Breast epithelium (tissue), 4 donors: ENCODE measurements at regions of chr9 and their contacts with region 1.

Region 1: GRCh38 chr9:131630205-131630831 is 85.0 kb downstream of the PRRT1B start:
- DNase-seq: no peak
- H3K4me3 ChIP-seq: no peak overlapping the region
- H3K27ac ChIP-seq: no peak overlapping the region
- H3K4me1 ChIP-seq: peaks cover 0 to 10% of the 10 kb centered on the region in 2 donors
- H3K27me3 ChIP-seq: no peaks in the 10 kb centered on the region
- CTCF ChIP-seq: no peak
- POLR2A ChIP-seq: no peak

Region 2: GRCh38 chr9:131203431-131204218 is 426.7 kb before region 1 on chr9:
- intact Hi-C with region 1: loop called (anchors 5 kb)
- DNase-seq: no peak
- H3K4me3 ChIP-seq: no peak overlapping the region
- H3K27ac ChIP-seq: no peak overlapping the region
- H3K4me1 ChIP-seq: no peaks in the 10 kb centered on the region
- H3K27me3 ChIP-seq: no peaks in the 10 kb centered on the region
- CTCF ChIP-seq: no peak
- POLR2A ChIP-seq: no peak

Region 3: DNA sequence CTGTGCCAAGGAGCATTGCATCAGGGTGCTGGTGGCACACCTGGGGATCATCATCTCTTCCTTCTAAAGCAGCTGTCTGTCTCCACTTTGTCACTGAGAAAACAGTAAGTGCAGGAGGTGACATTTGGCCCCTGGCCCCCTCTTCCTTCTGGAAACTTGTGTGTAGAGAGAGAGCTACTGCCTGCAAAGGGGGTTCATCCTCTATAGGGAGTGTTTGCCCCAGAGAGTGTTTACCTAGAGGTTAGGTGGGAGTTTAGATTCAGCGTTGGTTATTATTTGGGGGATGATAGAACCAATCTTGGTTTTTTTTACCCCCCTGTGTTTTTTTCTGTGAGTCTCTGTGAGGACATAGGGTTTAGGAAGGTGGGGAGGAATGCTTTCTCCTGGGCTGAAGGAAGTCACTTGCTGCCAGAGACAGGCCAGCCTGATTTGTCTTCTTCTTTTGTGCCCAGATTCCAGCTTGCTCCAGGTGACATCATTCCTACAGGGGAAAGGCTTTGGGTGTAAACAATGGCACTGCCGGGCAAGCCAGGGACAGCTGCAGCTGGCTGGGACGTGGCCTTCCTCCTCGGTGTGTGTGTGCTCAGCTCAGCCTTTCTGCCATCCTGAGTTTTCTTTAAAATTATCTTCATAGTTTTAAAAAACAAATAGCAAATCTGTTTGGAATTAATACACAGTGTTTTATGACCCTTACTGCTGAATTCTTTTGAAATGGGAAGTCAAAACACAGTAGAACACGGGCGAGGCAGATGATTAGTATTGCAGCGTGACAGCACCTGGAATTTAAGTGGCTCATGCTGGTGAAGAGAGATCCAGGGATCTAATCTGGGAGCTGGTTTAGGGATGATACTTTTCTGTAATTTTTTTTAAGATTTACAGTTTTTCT is 211.9 kb before region 1 on chr9:
- intact Hi-C with region 1: no loop called
- DNase-seq: peak; percentile 71 to 85
- H3K4me3 ChIP-seq: peak overlapping the region in 1 of 3 donors; percentile 10
- H3K27ac ChIP-seq: peak overlapping the region; percentile 78 to 90
- H3K4me1 ChIP-seq: peaks cover 17 to 57% of the 10 kb centered on the region in 2 donors
- H3K27me3 ChIP-seq: no peaks in the 10 kb centered on the region
- CTCF ChIP-seq: no peak
- POLR2A ChIP-seq: no peak